ENCODE measurements at regions of chr3 and their contacts with region 1.

Region 1: DNA sequence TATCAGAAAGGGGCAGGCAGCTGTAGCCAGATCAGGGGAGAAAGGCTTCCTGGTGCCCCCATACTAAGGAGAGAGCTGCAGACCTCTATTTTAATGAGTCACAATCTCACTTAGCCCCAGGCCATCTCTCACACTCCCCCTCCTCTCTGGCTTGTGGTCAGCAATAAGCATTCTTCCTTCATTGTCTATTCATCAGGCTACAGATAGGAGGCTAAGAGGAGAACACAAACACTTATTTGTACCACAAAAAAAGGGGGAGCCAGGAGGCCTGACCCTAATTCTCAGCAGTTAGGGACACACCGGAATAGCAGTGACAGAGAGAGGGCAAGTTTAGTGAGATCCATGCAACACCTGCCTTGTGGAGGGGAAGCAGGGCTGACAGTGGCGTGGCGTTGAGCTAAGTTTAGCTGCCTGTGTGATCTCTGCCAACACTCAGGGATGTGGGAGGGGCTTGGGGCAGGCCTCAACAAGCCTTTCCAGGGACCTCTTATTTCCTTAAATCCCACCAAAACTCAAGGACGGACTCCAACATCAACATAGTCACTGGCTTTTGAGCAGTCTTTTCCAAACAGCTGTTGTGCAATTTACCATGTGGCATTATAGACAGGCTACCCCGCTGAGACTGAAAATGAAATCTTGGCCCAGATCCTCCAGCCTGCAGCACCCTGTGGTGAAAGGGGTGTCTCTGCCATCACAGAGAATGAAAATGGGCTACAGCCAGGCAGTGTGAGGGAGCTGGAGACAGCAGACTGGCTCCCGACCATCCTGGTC is 191.9 kb upstream of the TSC22D2 start:
- DNase-seq: no peak
- ATAC-seq: no peak
- H3K4me3 ChIP-seq: no peak overlapping the region
- H3K27ac ChIP-seq: no peak overlapping the region
- H3K4me1 ChIP-seq: no peaks in the 10 kb centered on the region; the same call in 1 of the 2 replicates
- H3K27me3 ChIP-seq: 0 out of 5 replicates have a peak, but pooled peaks cover 0 to 3% of the 10 kb centered on the region in 2 experiments
- CTCF ChIP-seq: no peak
- EP300 ChIP-seq: no peak
- POLR2A ChIP-seq: no peak
- RAD21 ChIP-seq: no peak

Region 2: DNA sequence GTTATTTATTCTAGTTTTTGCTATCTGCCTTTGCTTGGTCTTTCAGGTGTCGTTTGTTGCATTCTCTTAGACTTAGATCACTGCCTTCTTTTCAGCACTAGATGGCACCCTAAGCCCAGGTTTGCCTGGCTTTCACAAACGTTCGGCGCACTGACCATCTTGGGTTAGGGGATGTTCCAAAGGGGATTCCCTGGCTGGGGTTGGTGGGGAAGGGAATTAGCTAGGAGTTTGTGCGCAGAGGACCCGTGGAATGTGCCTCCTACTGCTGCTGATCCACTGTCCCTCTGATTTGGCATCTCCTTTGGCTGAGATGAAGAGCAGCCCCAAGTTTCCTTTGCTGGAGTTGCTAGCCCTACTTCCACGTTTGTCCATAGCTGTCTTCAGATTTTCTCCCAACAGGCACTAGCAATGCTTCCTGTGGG is 279.4 kb before region 1 on chr3:
- CTCF ChIA-PET with region 1: interaction called, 14 read pairs
- POLR2A ChIA-PET with region 1: no interaction called
- in situ Hi-C with region 1: no loop called
- intact Hi-C with region 1: loop called (anchors 1 kb)
- DNase-seq: peak; percentile 47
- ATAC-seq: peak; percentile 88
- H3K4me3 ChIP-seq: no peak overlapping the region
- H3K27ac ChIP-seq: no peak overlapping the region
- H3K4me1 ChIP-seq: no peaks in the 10 kb centered on the region
- H3K27me3 ChIP-seq: no peaks in the 10 kb centered on the region
- CTCF ChIP-seq: peak; percentile 88
- EP300 ChIP-seq: no peak
- POLR2A ChIP-seq: no peak
- RAD21 ChIP-seq: peak; percentile 67

Region 3: DNA sequence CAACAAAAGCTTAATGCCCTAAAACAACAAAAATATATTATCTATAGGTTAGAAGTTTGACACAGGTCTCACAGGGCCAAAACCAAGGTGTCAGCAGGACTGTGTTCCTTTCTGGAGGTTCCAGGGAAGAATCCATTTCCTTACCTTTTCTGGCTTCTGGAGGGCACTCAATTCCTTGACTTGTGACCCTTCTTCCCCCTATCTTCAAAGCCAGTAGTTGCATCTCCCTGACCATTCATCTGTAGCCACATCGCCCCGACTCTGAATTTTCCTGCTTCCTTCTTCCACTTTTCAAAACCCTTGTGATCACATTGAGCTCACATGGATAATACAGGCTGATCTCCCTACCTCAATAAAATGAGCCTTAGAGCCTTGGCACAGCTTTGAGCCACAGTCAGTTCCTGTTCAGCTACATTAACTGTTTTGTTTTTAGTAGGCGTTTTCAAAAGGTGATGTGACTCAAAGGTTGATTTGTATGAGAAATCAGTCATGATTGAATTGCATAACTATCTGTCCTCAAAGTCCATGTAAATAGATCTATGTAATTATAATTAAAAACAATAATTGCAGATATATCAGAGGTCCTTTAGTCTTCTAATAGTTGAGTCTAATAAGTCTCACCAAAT is 257.9 kb before region 1 on chr3:
- CTCF ChIA-PET with region 1: no interaction called
- POLR2A ChIA-PET with region 1: no interaction called
- in situ Hi-C with region 1: loop called (anchors 10 kb)
- intact Hi-C with region 1: no loop called
- DNase-seq: no peak
- ATAC-seq: no peak; the same call in 2 of the 3 replicates
- H3K4me3 ChIP-seq: no peak overlapping the region
- H3K27ac ChIP-seq: no peak overlapping the region
- H3K4me1 ChIP-seq: peaks cover 14% of the 10 kb centered on the region
- H3K27me3 ChIP-seq: no peaks in the 10 kb centered on the region
- CTCF ChIP-seq: no peak
- EP300 ChIP-seq: no peak
- POLR2A ChIP-seq: no peak
- RAD21 ChIP-seq: no peak

Region 4: DNA sequence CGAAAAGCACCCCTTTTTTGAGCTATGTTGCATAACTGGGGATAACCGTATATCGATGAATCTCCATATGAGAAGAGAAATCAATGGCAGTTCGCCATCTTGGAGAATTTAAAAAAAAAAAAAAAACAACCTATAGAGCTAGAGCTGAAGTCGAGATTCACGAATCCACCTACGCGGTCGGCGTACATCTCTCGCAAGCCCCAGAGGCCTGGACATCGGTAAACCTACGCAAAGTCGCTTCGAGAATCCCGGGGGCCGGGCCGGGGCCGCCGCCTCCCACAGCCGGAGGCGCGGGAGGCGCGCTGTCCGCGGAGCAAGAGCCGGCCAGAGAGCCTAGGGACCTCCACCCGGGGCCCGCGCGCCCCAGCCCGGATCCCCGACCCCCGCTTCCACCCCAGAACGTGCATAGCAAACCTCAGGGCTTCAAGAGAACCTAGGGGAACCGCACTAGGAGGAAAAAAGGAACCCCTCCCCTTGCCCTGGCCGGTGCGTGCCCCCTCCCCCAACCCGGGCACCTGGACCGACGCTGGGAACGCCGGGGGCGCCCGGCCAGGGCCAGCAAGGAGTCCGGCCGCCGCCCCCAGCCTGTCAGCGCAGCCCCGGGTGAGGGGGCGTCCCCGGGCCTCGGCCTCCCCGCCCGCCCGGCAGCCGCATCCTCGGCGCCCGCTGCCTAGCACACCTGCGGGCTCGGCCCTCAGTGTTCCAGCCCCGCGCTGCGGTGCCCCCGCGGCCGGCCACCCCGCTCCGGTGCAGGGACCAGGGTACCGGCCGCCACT is 246.1 kb before region 1 on chr3:
- CTCF ChIA-PET with region 1: interaction called, 19 read pairs
- POLR2A ChIA-PET with region 1: no interaction called
- in situ Hi-C with region 1: no loop called
- intact Hi-C with region 1: loop called (anchors 1 kb)
- DNase-seq: peak; percentile 78
- ATAC-seq: peak; percentile 67
- H3K4me3 ChIP-seq: peak overlapping the region; percentile 82 to 93 (median 92)
- H3K27ac ChIP-seq: peak overlapping the region; percentile 93
- H3K4me1 ChIP-seq: peaks cover 46% of the 10 kb centered on the region
- H3K27me3 ChIP-seq: no peaks in the 10 kb centered on the region; a peak in 1 of 5 replicates
- CTCF ChIP-seq: no peak
- EP300 ChIP-seq: no peak
- POLR2A ChIP-seq: peak in 1 of 2 experiments; percentile 59; a peak in 2 of 4 replicates
- RAD21 ChIP-seq: no peak